Sciatic nerve (tissue), 2 donors: ENCODE measurements at regions of chr11 and their contacts with region 1.

Region 1: GRCh38 chr11:82229341-82229740 is 504.3 kb downstream of the FAM181B start:
- DNase-seq: no peak
- ATAC-seq: no peak

Region 2: DNA sequence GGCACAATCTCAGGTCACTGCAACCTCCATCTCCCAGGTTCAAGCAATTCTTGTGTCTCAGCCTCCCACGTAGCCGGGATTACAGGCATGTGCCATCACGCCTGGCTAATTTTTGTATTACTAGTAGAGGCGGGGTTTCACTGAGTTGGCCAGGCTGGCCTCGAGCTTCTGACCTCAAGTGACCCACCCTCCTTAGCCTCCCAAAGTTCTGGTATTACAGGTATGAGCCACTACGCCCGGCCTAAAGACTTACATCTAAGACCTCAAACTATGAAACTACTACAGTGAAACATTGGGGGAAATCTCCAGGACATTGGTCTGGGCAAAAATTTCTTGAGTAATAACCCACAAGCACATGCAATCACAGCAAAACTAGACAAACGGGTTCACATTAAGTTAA is 518.1 kb after region 1 on chr11:
- intact Hi-C with region 1: loop called (anchors 10 kb)
- DNase-seq: no peak
- ATAC-seq: no peak